ENCODE measurements at regions of chr16 and their contacts with region 1.

Region 1: DNA sequence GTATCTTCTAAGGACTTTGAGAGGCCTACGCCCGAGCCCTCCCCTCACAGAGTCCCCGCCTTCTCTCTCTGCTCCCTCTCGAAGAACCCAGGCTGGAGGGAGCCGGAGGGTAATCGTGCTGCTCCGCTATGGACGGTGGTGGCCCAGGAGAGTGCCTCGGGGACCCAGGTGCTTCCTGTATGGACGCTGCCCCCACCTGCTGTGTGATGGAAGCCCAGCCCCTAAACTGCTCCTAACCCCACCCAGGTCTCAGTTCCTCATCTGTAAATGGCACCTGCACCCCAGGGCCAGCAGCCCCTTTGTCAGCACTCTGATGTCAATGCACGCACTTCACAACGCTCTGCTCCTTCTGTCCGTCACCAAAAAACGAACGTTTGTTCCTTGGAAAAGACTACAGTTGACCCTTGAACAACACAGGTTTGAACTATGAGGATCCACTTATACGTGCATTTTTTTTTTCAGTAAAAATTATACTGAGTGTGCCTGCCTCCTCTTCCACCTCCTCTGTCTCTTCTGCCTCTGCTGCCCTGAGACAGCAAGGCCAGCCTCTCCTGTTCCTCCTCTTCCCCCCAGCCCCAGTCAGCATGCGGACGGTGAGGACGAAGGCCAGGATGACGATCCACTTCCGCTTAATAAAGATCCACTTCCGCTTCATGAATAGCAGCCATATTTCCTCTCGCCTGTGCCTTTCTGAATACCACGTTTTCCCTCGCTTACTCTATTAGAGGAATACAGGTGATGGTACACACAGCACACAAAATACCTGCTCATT is 118.3 kb downstream of the BANP start:
- DNase-seq: no peak
- H3K4me3 ChIP-seq: no peak overlapping the region
- CTCF ChIP-seq: no peak
- POLR2A ChIP-seq: no peak

Region 2: GRCh38 chr16:87853411-87854052 is 216.1 kb before region 1 on chr16:
- intact Hi-C with region 1: no loop called
- DNase-seq: peak; percentile 94 to 99
- H3K4me3 ChIP-seq: no peak overlapping the region
- CTCF ChIP-seq: no peak
- POLR2A ChIP-seq: no peak

Region 3: DNA sequence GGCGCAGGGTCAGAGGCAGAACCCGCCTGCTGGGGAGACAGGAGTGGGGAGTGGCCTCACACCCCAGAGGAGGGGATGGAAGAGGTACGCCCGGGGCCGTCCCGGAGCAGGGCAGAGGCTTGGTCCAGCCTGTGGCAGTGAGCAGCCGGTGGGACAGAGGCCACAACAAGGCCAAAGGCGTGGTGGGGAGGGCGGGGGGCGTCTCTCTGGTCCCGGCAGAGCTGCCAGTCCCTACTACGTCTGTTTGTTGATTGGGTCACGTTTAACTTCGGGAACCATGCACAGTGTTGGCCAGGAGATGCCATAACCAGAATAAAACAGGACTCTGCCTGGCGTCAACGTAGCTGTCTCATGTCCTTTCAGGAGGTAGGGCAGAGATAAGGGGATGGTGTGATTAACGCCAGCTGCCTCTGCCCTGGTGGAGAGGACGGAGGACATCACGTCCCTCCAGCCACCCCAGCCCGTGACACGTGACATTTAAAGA is 74.5 kb after region 1 on chr16:
- intact Hi-C with region 1: loop called (anchors 2 kb)
- DNase-seq: no peak
- H3K4me3 ChIP-seq: no peak overlapping the region
- CTCF ChIP-seq: no peak
- POLR2A ChIP-seq: no peak

Region 4: GRCh38 chr16:88274847-88275246 is 205.3 kb after region 1 on chr16:
- intact Hi-C with region 1: no loop called
- DNase-seq: peak in 1 of 2 donors; percentile 79
- H3K4me3 ChIP-seq: no peak overlapping the region
- CTCF ChIP-seq: no peak
- POLR2A ChIP-seq: no peak

Measured in lower leg skin (tissue), 4 donors.